AG04449 (cell line): ENCODE measurements at regions of chr19 and their contacts with region 1.

Region 1: DNA sequence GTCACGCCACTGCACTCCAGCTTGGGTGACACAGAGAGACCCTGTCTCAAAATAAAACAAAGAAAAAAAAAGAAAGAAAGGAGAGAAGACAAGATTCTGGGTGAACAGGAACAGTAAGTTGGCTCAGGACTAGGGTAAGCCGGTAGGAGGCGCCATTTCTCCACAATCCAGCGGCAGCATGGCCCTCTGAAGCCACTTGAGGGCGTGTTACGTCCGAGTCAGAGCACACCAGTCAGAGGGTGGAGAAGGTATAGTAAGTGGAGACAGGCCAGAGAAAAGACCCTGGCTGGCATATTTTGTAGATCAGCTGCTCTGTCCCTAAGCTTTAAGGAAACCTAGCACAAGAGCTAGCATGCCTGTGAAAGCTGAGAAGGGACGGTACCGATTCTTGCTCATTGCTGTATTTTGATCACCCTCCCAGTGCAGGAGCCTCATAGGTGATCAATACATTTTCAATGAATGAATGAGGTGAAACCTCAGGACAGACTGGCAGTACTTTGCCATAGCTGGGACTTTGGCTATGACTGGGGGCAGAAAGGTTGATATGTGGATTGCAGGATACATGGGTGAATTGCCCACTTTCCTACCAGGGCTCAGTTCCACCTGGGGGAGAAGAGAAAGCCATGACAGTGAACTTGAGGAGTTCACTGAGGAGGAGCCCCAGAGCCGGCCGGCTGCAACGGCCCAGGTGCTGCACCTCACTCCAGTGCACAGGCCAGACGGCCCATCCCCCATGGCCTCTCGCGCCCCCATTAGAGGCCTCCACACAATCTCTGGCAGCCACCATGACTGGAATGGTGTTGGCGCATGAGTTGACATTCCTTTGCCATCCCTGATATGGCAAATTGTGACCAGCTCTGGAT is 23.5 kb downstream of the POU2F2 start:
- DNase-seq: peak; percentile 56
- H3K4me3 ChIP-seq: no peak overlapping the region
- CTCF ChIP-seq: peak; percentile 100

Region 2: GRCh38 chr19:41993612-41994483 is 114.9 kb before region 1 on chr19 and contains the start of gene ATP1A3:
- CTCF ChIA-PET with region 1: no interaction called
- POLR2A ChIA-PET with region 1: no interaction called
- DNase-seq: no peak
- H3K4me3 ChIP-seq: peak within 1 kb of the TSS; percentile 39
- CTCF ChIP-seq: no peak

Region 3: GRCh38 chr19:42121656-42122069 is 12.9 kb after region 1 on chr19:
- CTCF ChIA-PET with region 1: interaction called, 48 read pairs
- POLR2A ChIA-PET with region 1: interaction called, 11 read pairs
- DNase-seq: no peak
- H3K4me3 ChIP-seq: no peak overlapping the region
- CTCF ChIP-seq: no peak

Region 4: DNA sequence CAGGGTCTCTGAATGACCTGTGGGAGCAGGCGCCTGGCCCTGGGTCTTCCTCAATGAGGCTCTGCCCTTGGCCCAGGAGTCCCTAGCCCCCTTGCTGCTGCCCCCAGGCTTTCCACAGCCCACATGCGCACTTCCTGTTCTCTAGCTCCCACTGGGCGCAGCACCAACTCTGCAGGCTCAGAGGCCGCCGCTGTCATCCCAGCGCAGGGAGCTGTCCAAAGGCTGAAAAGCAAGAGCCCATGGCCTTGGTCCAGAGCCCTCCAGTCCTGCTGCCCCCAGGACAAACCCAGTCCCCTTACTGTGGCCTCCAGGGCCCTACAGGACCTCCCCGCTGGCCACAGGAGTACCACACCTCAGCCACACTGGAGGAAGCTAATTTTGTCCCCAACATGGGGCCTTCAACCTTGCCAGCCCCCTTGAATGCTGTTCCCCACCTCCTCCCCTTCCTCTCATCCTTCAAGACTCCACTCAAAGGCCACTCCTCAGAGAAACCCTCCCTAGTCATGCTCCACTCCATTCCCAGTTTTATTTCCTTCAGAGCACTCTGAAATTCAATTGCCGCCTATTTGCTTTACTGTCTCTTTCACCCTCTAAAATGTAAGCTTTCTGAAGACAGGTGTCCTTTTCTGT is 31.5 kb after region 1 on chr19:
- CTCF ChIA-PET with region 1: interaction called, 92 read pairs
- POLR2A ChIA-PET with region 1: no interaction called
- DNase-seq: no peak
- H3K4me3 ChIP-seq: no peak overlapping the region
- CTCF ChIP-seq: no peak

Region 5: GRCh38 chr19:42176990-42177685 is 68.4 kb after region 1 on chr19:
- CTCF ChIA-PET with region 1: interaction called, 173 read pairs
- POLR2A ChIA-PET with region 1: no interaction called
- DNase-seq: no peak
- H3K4me3 ChIP-seq: peak overlapping the region; percentile 60
- CTCF ChIP-seq: peak; percentile 68

Region 6: GRCh38 chr19:42219812-42220750 is 111.3 kb after region 1 on chr19 and contains the start of gene ZNF526:
- CTCF ChIA-PET with region 1: interaction called, 78 read pairs
- POLR2A ChIA-PET with region 1: interaction called, 3 read pairs
- DNase-seq: peak; percentile 80
- H3K4me3 ChIP-seq: peak within 1 kb of the TSS; percentile 84
- CTCF ChIP-seq: no peak

Region 7: GRCh38 chr19:42283143-42284065 is 174.6 kb after region 1 on chr19:
- CTCF ChIA-PET with region 1: interaction called, 13 read pairs
- POLR2A ChIA-PET with region 1: interaction called, 3 read pairs
- DNase-seq: no peak
- H3K4me3 ChIP-seq: peak overlapping the region; percentile 69
- CTCF ChIP-seq: no peak